ENCODE measurements at regions of chr2 and their contacts with region 1.

Region 1: GRCh38 chr2:210195101-210195852 is 24.1 kb upstream of the KANSL1L start:
- DNase-seq: peak; percentile 30
- ATAC-seq: peak; percentile 73; the same call in 1 of the 2 replicates
- H3K4me3 ChIP-seq: peak overlapping the region in 1 of 2 experiments; percentile 19; a peak in 1 of 4 replicates
- H3K27ac ChIP-seq: no peak overlapping the region
- H3K4me1 ChIP-seq: no peaks in the 10 kb centered on the region
- H3K27me3 ChIP-seq: no peaks in the 10 kb centered on the region; the same call in 1 of the 2 replicates
- CTCF ChIP-seq: peak; percentile 69; the same call in 1 of the 2 replicates

Region 2: GRCh38 chr2:208392300-208393080 is 1802.8 kb before region 1 on chr2:
- CTCF ChIA-PET with region 1: no interaction called
- POLR2A ChIA-PET with region 1: no interaction called
- in situ Hi-C with region 1: no loop called
- intact Hi-C with region 1: loop called (anchors 10 kb)
- DNase-seq: no peak
- ATAC-seq: 0 out of 2 replicates have a peak, but pooled peaks have one; percentile 56
- H3K4me3 ChIP-seq: no peak overlapping the region
- H3K27ac ChIP-seq: no peak overlapping the region
- H3K4me1 ChIP-seq: no peaks in the 10 kb centered on the region
- H3K27me3 ChIP-seq: peaks cover 2% of the 10 kb centered on the region; the same call in 1 of the 2 replicates
- CTCF ChIP-seq: peak; percentile 45; the same call in 1 of the 2 replicates

Region 3: DNA sequence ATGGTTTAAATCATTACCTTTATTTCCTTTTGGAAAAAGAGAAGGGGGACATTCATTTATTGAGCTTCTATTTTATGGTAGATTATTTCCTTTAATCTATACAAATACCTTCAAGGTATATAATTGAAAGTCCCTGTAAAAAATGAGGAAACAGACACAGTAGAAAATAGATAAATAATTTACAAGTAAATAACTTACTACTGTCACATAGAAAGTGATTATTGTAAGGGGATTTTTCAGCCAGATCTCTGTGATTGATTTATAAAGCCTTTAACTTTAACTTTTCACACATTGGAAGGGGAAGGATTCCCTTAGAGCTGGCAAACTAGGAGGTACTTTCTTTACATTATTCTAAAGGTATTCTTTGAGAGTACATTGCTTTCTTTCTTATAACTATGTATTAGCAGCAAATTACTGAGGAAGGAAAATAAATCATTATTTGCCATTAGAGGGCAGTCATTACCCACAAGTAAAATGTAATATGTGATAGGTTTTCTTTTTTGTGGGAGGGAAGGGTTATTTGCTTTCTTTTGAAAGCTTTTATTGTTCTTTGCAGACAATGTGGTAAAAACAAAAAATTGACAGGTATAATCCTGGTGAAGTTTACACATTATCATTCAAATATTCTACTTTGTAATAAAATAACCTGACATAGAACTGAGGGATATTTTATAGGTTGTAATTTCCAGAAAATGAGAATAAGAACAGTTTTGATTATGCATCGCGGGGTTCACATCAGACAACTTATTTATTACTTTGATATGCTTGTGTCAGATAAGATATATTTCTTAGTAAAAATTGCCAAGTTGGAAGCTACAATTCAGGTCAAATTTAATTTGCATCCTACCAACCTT is 217.7 kb before region 1 on chr2:
- CTCF ChIA-PET with region 1: no interaction called
- POLR2A ChIA-PET with region 1: no interaction called
- in situ Hi-C with region 1: no loop called
- intact Hi-C with region 1: loop called (anchors 2 kb)
- DNase-seq: peak; percentile 10
- ATAC-seq: no peak
- H3K4me3 ChIP-seq: no peak overlapping the region
- H3K27ac ChIP-seq: no peak overlapping the region
- H3K4me1 ChIP-seq: no peaks in the 10 kb centered on the region
- H3K27me3 ChIP-seq: peaks cover 2% of the 10 kb centered on the region; the same call in 1 of the 2 replicates
- CTCF ChIP-seq: peak; percentile 58; the same call in 1 of the 2 replicates

Region 4: GRCh38 chr2:210072922-210073509 is 122.3 kb before region 1 on chr2:
- CTCF ChIA-PET with region 1: interaction called, 3 read pairs
- POLR2A ChIA-PET with region 1: no interaction called
- in situ Hi-C with region 1: no loop called
- intact Hi-C with region 1: loop called (anchors 1 kb)
- DNase-seq: peak; percentile 12
- ATAC-seq: 0 out of 2 replicates have a peak, but pooled peaks have one; percentile 60
- H3K4me3 ChIP-seq: no peak overlapping the region
- H3K27ac ChIP-seq: no peak overlapping the region
- H3K4me1 ChIP-seq: no peaks in the 10 kb centered on the region
- H3K27me3 ChIP-seq: no peaks in the 10 kb centered on the region
- CTCF ChIP-seq: peak; percentile 67

Region 5: DNA sequence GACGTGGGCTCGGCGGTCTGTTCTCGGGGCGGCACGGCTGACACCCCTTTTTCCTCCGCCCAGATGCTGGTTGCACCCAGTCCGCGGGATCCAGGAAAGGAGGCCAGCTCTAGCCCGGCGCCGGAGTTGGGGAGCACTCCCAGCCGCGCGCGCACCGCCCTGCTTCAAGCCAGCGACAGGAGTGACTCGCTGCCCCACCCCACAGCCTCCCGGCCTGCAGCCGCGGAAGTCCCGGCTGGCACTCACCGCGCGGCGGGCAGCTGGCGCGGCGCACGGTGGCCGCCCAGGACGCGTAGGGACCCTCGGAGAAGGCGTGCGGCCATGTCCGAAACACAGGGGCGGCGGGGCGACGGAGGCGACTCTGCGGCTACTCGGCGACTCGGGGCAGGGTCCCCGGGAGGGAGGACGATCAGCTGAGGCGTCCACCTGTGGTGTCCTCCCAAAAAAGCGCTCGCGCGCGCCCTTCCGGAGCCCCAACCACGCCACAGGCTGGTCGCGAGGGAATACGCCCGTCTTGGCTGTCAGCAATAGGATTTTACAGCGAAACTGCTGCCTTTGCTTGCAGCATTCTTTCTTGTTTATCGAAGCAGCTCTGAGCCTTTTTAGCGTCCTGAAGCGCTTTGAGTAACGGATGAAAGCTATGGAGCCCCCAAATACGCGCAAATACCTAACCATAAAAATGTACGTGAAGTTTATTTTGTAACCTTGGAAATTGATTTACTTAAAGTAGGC is 29.8 kb after region 1 on chr2 and contains the start of gene ACADL:
- CTCF ChIA-PET with region 1: no interaction called
- POLR2A ChIA-PET with region 1: no interaction called
- in situ Hi-C with region 1: no loop called
- intact Hi-C with region 1: no loop called
- DNase-seq: no peak
- ATAC-seq: peak; percentile 88
- H3K4me3 ChIP-seq: peak within 1 kb of the TSS; percentile 47 to 60
- H3K27ac ChIP-seq: no peak within 1 kb of the TSS
- H3K4me1 ChIP-seq: no peaks in the 10 kb centered on the region
- H3K27me3 ChIP-seq: peaks cover 42% of the 10 kb centered on the region
- CTCF ChIP-seq: no peak
- total RNA-seq, gene ACADL: not detected

Measured in Panc1 (cell line).